Endothelial cell of umbilical vein (primary cell): ENCODE measurements at regions of chr2 and their contacts with region 1.

Region 1: DNA sequence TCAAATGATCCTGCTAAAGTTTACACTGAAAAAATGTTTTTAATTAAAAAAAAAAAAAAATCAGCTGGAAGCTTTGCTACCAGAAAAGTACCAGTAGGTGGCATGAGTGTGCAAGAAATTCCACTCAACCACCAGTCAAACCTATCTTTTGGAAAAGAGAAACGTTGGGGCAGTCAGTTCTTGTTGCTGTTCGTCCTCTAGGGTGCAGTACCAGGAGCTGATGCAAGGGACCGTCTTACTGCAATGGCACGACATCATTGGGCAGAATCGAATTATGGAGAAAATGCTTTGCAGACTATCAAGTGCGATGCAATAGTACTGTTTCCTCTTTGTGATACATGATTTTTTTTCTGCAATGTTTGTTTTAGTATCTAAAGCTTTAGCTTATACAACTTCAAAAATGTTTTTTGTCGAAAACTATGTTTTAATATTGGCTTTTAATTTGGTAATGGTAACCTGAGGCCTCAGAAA is 18.3 kb downstream of the YPEL5 start:
- DNase-seq: peak; percentile 87
- H3K4me3 ChIP-seq: no peak overlapping the region
- H3K27ac ChIP-seq: no peak overlapping the region
- H3K4me1 ChIP-seq: no peaks in the 10 kb centered on the region
- H3K27me3 ChIP-seq: peaks cover 0 to 1% of the 10 kb centered on the region in 2 experiments
- CTCF ChIP-seq: peak; percentile 75 to 82
- POLR2A ChIP-seq: no peak

Region 2: GRCh38 chr2:30115141-30115980 is 49.7 kb before region 1 on chr2:
- CTCF ChIA-PET with region 1: interaction called, 10 read pairs
- POLR2A ChIA-PET with region 1: no interaction called
- dilution Hi-C with region 1: no loop called
- intact Hi-C with region 1: no loop called
- DNase-seq: peak; percentile 68
- H3K4me3 ChIP-seq: no peak overlapping the region
- H3K27ac ChIP-seq: no peak overlapping the region
- H3K4me1 ChIP-seq: peaks cover 2% of the 10 kb centered on the region
- H3K27me3 ChIP-seq: peaks cover 0 to 2% of the 10 kb centered on the region in 2 experiments
- CTCF ChIP-seq: peak; percentile 80 to 84
- POLR2A ChIP-seq: no peak

Region 3: DNA sequence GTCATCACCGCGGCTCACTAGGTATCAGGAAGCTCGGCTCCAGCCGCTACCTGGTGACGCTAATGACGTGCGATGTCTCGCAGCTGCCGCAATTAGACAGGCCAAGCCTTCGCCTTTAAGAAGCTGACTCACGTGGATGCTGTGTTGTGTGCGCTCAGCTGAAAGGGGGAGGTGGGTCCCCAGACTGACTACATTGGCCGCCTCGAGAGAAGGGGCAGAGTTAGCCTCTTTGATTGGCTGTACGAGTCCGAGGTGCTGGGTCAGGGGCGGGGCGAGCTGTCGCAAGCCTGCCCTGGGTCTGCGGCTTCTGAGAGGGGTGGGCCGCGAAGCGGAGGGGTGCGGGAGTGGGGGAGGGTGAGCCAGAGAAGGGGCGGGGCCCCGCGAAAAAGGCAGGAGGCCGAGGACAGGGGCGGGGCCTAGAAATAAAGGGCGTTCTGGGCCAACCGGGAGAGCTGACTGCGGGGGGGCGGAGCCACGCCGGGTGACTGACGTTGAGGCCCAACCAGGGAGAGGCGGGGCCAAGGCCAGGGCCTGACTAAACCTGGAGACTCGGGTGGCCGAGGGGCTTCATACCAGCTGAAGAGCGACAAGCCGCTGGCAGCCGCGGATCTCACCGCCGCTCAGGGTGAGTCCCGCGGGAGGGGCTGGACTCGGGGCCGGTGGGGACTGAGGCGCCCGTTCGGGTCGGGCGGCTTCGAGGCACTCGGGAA is 18.5 kb before region 1 on chr2 and contains the start of gene YPEL5:
- CTCF ChIA-PET with region 1: interaction called, 101 read pairs
- POLR2A ChIA-PET with region 1: interaction called, 14 read pairs
- dilution Hi-C with region 1: no loop called
- intact Hi-C with region 1: loop called (anchors 1 kb)
- DNase-seq: peak; percentile 100
- H3K4me3 ChIP-seq: peak within 1 kb of the TSS; percentile 75 to 92 (median 80)
- H3K27ac ChIP-seq: peak within 1 kb of the TSS; percentile 87
- H3K4me1 ChIP-seq: peaks cover 30% of the 10 kb centered on the region
- H3K27me3 ChIP-seq: peaks cover 1 to 7% of the 10 kb centered on the region in 2 experiments
- CTCF ChIP-seq: no peak
- POLR2A ChIP-seq: peak; percentile 66
- total RNA-seq, gene YPEL5: 59.3 and 62.0 TPM in 2 replicates

Region 4: DNA sequence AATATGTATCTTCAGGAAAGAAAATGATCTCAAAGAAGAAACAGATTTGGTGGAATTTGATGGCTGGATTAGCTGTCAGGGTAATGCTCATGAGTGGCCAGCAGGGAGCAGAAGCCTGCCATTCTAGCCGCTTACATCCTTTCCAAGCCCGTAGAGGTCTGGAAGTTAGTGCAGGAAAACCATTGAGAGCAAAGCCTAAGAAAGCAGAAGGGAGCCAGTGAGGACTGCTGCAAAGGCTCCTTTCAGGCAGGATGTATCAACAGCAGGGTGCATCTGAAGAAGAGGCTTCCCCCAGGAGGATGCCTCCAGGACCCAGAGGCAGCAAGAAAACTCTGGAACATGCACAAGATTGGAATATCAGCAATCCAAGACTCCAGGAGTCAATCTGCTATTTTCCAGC is 43.4 kb after region 1 on chr2:
- CTCF ChIA-PET with region 1: interaction called, 103 read pairs
- POLR2A ChIA-PET with region 1: no interaction called
- dilution Hi-C with region 1: no loop called
- intact Hi-C with region 1: loop called (anchors 1 kb)
- DNase-seq: peak; percentile 69
- H3K4me3 ChIP-seq: no peak overlapping the region
- H3K27ac ChIP-seq: no peak overlapping the region
- H3K4me1 ChIP-seq: no peaks in the 10 kb centered on the region
- H3K27me3 ChIP-seq: peaks cover 0 to 2% of the 10 kb centered on the region in 2 experiments
- CTCF ChIP-seq: peak; percentile 80 to 85
- POLR2A ChIP-seq: no peak

Region 5: GRCh38 chr2:30447149-30448045 is 282.3 kb after region 1 on chr2 and contains the start of gene LCLAT1:
- CTCF ChIA-PET with region 1: interaction called, 4 read pairs
- POLR2A ChIA-PET with region 1: no interaction called
- dilution Hi-C with region 1: no loop called
- intact Hi-C with region 1: loop called (anchors 2 kb)
- DNase-seq: peak; percentile 79
- H3K4me3 ChIP-seq: peak within 1 kb of the TSS; percentile 89 to 91 (median 90)
- H3K27ac ChIP-seq: peak within 1 kb of the TSS; percentile 83
- H3K4me1 ChIP-seq: peaks cover 13% of the 10 kb centered on the region
- H3K27me3 ChIP-seq: no peaks in the 10 kb centered on the region
- CTCF ChIP-seq: no peak
- POLR2A ChIP-seq: peak; percentile 18
- total RNA-seq, gene LCLAT1: 17.1 and 20.8 TPM in 2 replicates